ENCODE measurements at regions of chr22 and their contacts with region 1.

Region 1: DNA sequence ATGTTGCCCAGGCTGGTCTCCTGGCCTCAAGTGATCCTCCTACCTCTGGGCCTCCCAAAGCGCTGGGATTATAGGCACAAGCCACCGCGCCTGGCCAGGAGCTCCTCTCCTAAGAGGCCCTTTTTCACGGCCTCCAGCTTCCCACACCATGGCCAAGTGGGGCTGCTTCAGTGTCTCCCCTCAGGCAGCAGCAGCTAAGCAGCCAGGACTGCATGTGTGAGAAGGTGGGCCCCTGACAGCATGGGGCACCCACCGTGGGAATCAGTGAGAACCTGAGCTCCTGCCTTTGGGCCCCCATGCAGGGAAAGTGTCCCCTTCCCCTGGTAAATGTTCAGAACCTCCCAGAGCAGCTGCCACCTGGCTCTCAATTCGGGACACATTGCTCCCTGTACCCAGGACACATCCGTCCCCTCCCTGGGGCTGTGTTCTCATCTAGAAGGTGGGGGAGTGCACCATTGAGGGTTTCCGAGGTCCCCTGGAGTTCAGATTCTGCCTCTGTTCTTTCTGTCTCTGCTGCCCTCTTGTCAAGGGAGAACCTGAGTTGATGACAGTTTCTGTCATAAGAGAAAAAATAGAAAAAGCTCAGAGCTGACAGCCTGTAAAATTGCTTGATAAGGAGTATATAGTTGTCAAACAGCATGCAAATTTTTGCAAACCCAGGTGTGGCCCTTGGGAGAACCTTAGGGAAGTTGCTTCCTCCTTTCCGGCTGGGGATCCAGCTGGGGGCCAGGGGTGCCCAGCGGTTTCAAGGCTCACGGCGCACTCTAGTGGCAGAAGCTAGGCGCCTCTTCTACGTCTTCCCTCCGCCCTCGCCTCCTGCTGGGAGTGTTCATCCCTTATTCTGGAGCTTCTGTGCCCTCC is 29.7 kb downstream of the FAM83F start:
- DNase-seq: peak; percentile 49 to 90 (median 60)
- ATAC-seq: peak; percentile 95
- H3K4me3 ChIP-seq: no peak overlapping the region
- H3K27ac ChIP-seq: no peak overlapping the region
- H3K4me1 ChIP-seq: no peaks in the 10 kb centered on the region
- H3K27me3 ChIP-seq: no peaks in the 10 kb centered on the region
- CTCF ChIP-seq: peak; percentile 77 to 81

Region 2: DNA sequence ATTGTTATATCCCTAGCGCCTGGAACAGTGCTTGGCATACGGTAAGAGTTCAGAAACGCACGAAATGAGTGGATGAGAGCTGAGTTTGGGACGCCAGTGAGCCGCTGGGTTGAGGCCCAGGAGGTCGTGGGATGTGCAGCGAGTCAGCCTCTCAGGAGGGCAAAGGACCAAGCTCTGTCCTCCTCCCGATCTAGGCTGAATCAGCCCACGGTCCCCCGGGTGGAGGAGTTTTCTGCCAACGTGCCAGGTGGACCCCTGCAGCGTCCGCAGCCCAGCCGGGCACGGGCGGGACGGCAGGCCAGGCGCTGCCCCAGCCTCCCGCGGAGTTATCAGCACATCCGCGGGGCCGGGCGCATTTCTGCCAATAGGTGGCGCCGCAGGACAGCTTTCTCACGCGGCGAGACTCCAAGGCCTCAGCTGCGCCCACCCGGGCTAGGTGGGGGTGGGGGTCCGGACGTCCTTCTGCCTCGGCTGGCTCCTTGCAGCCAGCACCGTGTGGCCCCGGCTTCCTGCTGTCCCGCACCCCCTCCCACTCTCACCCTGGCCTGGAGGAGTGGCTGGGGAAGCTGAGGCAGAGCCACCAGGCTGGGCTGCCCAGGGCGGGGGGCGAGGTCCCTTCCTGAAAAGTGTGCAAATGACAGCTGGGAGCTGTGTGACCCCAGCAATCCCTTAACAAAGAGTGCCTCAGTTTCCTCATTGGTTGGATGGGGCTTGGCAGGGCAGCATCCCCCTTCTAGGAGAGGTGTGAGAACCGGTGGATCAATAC is 489.7 kb before region 1 on chr22:
- intact Hi-C with region 1: loop called in 1 of 2 experiments (anchors 5 kb)
- DNase-seq: peak; percentile 79 to 95 (median 84)
- ATAC-seq: peak; percentile 41
- H3K4me3 ChIP-seq: no peak overlapping the region
- H3K27ac ChIP-seq: no peak overlapping the region
- H3K4me1 ChIP-seq: peaks cover 15 to 36% of the 10 kb centered on the region in 2 donors
- H3K27me3 ChIP-seq: no peaks in the 10 kb centered on the region
- CTCF ChIP-seq: peak; percentile 93

Region 3: DNA sequence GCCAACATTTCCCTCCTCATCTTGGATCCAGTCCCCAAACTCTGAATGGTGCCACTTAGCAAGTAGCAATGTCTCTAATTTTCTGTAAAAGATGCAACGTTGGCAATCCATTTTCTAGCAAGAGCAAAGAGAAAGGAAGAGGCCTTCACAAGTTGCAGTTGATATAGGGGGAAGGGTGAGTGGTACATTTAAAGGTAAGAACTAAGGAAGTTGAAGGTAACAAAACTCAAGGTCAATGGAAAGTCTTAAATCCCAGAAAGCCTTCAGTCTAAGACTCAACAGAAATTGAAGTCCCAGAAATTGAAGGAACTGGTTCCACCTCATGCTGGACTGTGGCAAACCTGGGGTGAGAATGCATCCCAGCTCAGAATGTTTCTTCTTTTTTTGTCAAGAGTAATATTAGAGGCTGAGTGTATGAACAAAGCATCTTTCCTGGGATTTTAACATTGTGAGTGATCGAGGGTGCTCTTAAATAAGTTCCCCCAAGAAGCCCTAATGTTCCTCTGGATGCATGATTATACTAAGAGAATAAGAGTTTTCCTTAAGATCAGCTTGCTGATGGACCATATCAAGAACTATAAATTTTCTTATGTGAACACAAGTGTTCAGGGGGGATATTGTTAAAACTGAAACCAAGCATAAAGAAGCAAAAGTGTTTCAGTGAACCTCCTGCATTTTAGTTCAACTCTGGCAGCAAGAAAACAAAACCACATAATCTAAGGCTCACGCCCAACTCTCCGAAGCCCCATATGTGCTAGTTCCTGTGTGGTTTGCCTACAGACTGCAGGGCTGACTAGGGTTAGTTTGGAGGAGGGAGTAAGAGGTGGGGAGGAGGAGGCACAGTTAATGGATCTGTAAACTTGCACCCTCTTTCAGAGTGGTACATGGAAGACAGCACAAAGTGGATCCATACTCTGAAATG is 123.9 kb before region 1 on chr22 and contains the start of gene GRAP2:
- intact Hi-C with region 1: no loop called
- DNase-seq: no peak
- ATAC-seq: peak; percentile 47
- H3K4me3 ChIP-seq: peak within 1 kb of the TSS in 1 of 2 donors; percentile 27
- H3K27ac ChIP-seq: no peak within 1 kb of the TSS
- H3K4me1 ChIP-seq: peaks cover 0 to 10% of the 10 kb centered on the region in 2 donors
- H3K27me3 ChIP-seq: peaks cover 0 to 21% of the 10 kb centered on the region in 2 donors
- CTCF ChIP-seq: no peak
- polyA plus RNA-seq, gene GRAP2: 1.5 to 2.7 (median 1.9) TPM

Measured in left lung (tissue), 14 donors.